Natural killer cell (primary cell): ENCODE measurements at regions of chr1 and their contacts with region 1.

Region 1: DNA sequence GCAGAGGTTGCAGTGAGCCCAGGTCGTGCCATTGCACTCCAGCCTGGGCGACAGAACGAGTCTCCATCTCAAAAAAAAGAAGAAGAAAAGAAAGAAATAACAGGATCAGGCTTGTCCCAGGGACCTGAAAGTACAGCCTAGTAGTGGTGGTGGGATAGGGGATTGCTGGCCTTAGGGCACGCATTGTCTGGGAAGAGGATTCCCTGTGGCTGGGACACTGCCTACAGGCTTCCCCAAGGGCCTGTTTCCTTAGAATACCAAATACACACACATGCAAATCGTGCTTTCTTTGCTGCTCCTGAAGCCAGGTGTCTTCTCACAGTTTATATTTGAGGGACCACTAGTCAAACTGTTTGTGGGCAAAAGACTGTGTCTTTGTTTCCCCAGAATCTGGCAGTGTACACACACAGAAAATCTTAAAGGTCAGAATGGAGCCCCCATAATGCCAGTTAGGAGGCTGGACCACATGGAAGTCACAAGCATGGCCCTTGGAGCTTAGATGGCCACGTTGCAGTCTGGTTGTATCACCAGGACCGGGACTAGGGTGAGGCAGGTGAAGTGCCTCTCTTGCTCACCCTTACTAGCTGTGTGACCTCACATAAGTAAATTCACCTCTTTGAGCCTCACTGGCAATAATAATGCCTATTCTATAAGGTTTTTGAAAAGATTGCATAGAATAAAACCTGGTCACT is 12.7 kb upstream of the ASAP3 start:
- DNase-seq: no peak
- ATAC-seq: peak in 1 of 3 donors; percentile 15
- H3K4me3 ChIP-seq: no peak overlapping the region
- H3K4me3 Mint-ChIP-seq: no peak overlapping the region
- H3K27ac ChIP-seq: no peak overlapping the region
- H3K27ac Mint-ChIP-seq: no peak overlapping the region
- H3K4me1 ChIP-seq: peaks cover 7% of the 10 kb centered on the region
- H3K4me1 Mint-ChIP-seq: no peaks in the 10 kb centered on the region
- H3K27me3 ChIP-seq: no peaks in the 10 kb centered on the region
- H3K27me3 Mint-ChIP-seq: peaks cover 4 to 10% of the 10 kb centered on the region in 2 donors
- CTCF ChIP-seq: no peak

Region 2: GRCh38 chr1:23249787-23250454 is 246.7 kb before region 1 on chr1:
- intact Hi-C with region 1: no loop called
- DNase-seq: no peak
- ATAC-seq: no peak
- H3K4me3 ChIP-seq: no peak overlapping the region
- H3K4me3 Mint-ChIP-seq: no peak overlapping the region
- H3K27ac ChIP-seq: no peak overlapping the region
- H3K27ac Mint-ChIP-seq: no peak overlapping the region
- H3K4me1 ChIP-seq: no peaks in the 10 kb centered on the region
- H3K4me1 Mint-ChIP-seq: peaks cover 0 to 5% of the 10 kb centered on the region in 2 donors
- H3K27me3 ChIP-seq: no peaks in the 10 kb centered on the region
- H3K27me3 Mint-ChIP-seq: peaks cover 0 to 3% of the 10 kb centered on the region in 2 donors
- CTCF ChIP-seq: no peak

Region 3: GRCh38 chr1:23452011-23452411 is 44.6 kb before region 1 on chr1:
- intact Hi-C with region 1: no loop called
- DNase-seq: peak in 1 of 2 donors; percentile 74
- ATAC-seq: peak in 2 of 3 donors; percentile 50 to 73
- H3K4me3 ChIP-seq: no peak overlapping the region
- H3K4me3 Mint-ChIP-seq: no peak overlapping the region
- H3K27ac ChIP-seq: no peak overlapping the region
- H3K27ac Mint-ChIP-seq: peak overlapping the region in 1 of 2 donors; percentile 69
- H3K4me1 ChIP-seq: peaks cover 11% of the 10 kb centered on the region
- H3K4me1 Mint-ChIP-seq: peaks cover 7 to 16% of the 10 kb centered on the region in 2 donors
- H3K27me3 ChIP-seq: no peaks in the 10 kb centered on the region
- H3K27me3 Mint-ChIP-seq: peaks cover 13 to 27% of the 10 kb centered on the region in 2 donors
- CTCF ChIP-seq: no peak

Region 4: DNA sequence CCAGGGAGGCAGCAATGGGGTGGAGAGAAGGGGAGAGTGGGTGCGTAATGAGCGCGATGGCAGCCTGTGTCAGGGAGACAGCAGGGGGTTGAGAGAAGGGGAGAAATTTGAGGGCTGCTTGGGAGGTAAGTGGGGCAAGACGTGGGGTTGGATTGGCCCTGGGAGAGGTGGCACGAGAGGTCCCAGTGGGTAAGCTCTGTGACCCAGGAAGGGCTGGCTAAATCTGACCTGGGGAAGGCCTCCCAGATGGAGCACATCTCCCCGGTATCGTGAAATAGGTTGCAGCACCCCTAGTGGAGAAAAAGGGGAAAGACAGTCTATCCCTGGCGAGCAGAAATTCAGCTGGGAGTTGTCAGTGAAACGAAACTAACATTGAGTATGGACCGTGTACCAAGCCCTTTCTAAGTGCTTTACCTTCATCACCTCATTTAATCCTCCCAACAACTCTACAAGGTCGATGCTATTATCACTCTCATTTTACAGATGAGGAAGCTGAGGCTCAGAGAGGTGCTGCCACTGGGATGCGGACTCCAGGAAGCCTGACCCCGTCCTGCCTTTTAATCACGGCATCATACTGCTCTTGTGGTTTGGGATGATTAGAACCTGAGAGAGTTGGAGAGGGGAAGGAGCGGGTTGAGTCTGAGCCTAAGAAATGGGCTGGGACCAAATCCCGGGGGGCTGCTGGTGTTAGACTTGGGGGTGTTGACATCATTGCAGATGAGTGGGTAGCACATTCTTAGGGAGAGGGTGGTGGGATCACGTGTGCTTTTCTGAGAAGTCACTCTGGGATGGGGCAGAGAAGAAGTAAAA is 138.4 kb after region 1 on chr1:
- intact Hi-C with region 1: loop called (anchors 5 kb)
- DNase-seq: peak; percentile 26 to 84
- ATAC-seq: peak; percentile 80 to 92 (median 88)
- H3K4me3 ChIP-seq: peak overlapping the region; percentile 17
- H3K4me3 Mint-ChIP-seq: peak overlapping the region; percentile 67
- H3K27ac ChIP-seq: no peak overlapping the region
- H3K27ac Mint-ChIP-seq: peak overlapping the region in 1 of 2 donors; percentile 48
- H3K4me1 ChIP-seq: peaks cover 15% of the 10 kb centered on the region
- H3K4me1 Mint-ChIP-seq: peaks cover 7 to 12% of the 10 kb centered on the region in 2 donors
- H3K27me3 ChIP-seq: no peaks in the 10 kb centered on the region
- H3K27me3 Mint-ChIP-seq: peaks cover 10 to 12% of the 10 kb centered on the region in 2 donors
- CTCF ChIP-seq: peak; percentile 83

Region 5: DNA sequence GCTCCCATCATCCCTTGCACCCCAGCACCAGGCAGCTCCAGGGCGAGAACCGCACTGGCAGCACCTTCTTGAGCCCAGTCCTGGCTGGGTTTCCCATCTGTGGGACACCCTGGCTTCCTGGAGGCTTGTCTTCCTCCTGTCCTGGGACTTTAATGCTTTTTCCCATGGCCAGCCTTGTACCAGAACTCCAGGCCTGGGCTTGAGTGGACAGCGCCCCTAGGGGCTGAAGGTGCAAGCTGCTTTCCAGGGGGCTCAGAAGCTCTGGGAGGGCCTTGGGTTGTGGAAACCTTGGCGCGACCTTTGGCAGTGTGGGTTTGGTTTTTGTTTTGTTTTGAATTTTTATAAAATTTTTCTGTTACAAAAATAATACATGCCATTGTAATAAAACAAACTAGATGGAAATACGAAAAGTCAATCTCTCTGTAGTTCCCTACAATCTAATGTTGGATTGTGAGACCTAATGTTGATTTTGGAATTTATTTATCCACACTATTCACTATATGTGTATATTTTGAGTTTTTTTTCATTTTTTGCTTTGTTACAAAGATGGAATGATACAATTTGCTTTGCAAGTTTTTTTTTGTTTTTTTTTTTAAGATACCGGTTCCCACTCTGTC is 161.1 kb after region 1 on chr1:
- intact Hi-C with region 1: no loop called
- DNase-seq: peak in 1 of 2 donors; percentile 55
- ATAC-seq: peak in 2 of 3 donors; percentile 70 to 76
- H3K4me3 ChIP-seq: no peak overlapping the region
- H3K4me3 Mint-ChIP-seq: no peak overlapping the region
- H3K27ac ChIP-seq: no peak overlapping the region
- H3K27ac Mint-ChIP-seq: no peak overlapping the region
- H3K4me1 ChIP-seq: no peaks in the 10 kb centered on the region
- H3K4me1 Mint-ChIP-seq: no peaks in the 10 kb centered on the region
- H3K27me3 ChIP-seq: no peaks in the 10 kb centered on the region
- H3K27me3 Mint-ChIP-seq: peaks cover 5 to 7% of the 10 kb centered on the region in 2 donors
- CTCF ChIP-seq: peak; percentile 63